Cardiac septum (tissue), 1 donor: ENCODE measurements at regions of chr9 and their contacts with region 1.

Region 1: DNA sequence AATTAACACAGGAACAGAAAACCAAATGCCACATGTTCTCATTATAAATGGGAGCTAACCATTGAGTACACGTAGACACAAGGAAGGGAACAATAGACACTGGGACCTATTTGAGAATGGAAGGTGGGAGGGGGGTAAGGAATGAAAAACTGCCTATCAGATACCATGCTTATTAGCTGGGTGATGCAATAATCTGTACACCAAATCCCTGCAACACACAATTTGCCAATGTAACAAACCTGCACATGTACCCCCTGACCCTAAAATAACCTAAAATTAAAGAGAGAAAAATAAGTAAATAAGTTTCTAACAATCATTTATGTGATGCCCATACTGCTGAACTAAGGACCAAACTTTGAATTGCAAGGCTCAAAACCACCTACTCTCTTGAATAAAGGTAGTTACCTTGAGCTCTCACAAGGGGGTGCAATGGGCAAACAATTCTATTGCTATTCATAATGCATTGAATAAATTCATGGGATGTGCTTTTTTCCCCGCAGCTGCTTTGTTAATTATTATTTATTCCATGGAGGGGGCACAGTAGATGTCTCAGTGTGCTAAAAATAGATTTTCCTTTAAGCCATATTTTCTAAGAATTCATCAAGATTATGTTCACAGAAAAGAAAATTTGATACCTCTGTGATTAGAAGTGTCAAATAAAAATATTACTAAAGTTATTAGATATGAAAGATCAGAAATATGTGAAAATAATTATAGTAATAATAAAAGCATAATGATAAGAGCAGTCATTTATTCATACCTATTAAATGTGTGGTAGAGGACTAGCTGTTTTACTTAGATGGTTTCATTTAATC is 76.2 kb upstream of the PTPN3 start:
- DNase-seq: no peak

Region 2: GRCh38 chr9:108786901-108787689 is 787.2 kb before region 1 on chr9:
- intact Hi-C with region 1: no loop called
- DNase-seq: no peak

Region 3: DNA sequence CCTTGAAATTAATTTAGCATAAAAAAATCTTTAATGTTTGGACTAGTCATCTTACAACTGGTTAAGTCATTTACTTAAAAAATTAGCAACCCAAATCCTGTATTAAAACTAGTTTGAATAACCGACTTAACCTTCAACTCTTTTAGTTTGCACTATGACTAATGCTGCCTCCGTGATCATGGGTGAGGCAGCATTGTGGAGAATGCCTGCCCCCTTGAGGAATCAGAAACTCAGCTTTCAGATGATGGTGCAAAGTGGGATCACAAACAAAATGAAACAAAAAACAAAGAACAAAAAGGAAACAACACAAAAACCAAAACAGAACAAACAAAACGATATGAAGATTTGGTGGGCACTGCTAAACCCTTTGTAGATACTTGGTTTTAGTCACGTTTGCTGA is 78.7 kb after region 1 on chr9:
- intact Hi-C with region 1: loop called (anchors 2 kb)
- DNase-seq: no peak

Region 4: GRCh38 chr9:109812818-109813281 is 238.6 kb after region 1 on chr9:
- intact Hi-C with region 1: loop called (anchors 5 kb)
- DNase-seq: no peak

Region 5: DNA sequence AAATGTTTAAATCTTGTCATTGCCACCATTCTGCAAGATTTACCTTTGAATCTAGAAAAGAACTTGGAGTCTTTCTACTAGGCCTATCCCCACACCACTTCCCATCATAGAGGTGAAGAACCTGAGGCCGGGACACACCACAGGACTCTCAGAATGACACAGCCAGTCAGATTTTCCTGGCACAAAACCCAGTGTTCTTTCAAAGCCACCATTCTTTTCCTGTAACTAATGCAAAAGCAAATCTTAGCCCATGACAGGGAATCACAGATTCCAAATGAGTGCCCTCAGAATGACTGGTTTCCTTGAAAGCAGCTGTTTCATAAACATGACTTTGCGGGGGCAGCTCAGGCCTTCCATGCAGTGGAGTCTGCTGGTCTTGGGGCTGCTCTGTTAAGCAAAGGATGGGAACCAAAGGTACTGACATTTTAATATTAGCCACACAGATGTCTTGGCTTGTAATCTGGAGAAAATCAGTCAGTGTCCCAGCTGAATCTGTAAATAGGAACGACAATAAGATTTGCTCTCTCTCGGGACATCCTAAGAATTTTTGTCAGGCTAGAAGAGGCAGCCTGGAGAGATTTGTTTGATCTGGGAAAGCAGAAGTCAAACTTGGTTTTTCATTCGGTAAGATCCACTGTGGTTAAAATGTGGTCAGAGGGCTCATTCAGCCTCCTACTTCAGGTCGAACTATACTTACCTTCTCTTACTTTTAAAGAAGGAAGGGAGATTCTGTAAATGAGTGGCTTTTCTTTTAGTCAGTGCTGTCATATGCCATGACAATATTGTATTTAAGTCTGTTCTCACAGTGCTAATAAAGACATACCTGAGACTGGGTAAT is 320.9 kb after region 1 on chr9:
- intact Hi-C with region 1: loop called (anchors 10 kb)
- DNase-seq: no peak

Region 6: GRCh38 chr9:110069326-110070248 is 495.3 kb after region 1 on chr9:
- intact Hi-C with region 1: loop called (anchors 10 kb)
- DNase-seq: peak; percentile 87

Region 7: GRCh38 chr9:110192531-110193261 is 618.4 kb after region 1 on chr9:
- intact Hi-C with region 1: loop called (anchors 10 kb)
- DNase-seq: no peak